Common myeloid progenitor, CD34-positive (primary cell): ENCODE measurements at regions of chr20 and their contacts with region 1.

Region 1: GRCh38 chr20:4720041-4720976 is 1.4 kb upstream of the PRND start:
- DNase-seq: peak; percentile 86 to 93 (median 91)
- H3K4me3 ChIP-seq: peak overlapping the region in 2 of 7 experiments; percentile 2 to 11
- H3K27ac ChIP-seq: no peak overlapping the region
- H3K4me1 ChIP-seq: peaks cover 0 to 13% (median 11%) of the 10 kb centered on the region in 4 experiments
- H3K27me3 ChIP-seq: no peaks in the 10 kb centered on the region

Region 2: GRCh38 chr20:4573564-4574355 is 146.5 kb before region 1 on chr20:
- CTCF ChIA-PET with region 1: no interaction called
- POLR2A ChIA-PET with region 1: no interaction called
- DNase-seq: peak; percentile 59 to 91 (median 90)
- H3K4me3 ChIP-seq: peak overlapping the region in 3 of 7 experiments; percentile 16 to 59 (median 22)
- H3K27ac ChIP-seq: no peak overlapping the region
- H3K4me1 ChIP-seq: peaks cover 2 to 14% (median 9%) of the 10 kb centered on the region in 4 experiments
- H3K27me3 ChIP-seq: no peaks in the 10 kb centered on the region

Region 3: GRCh38 chr20:4607287-4607713 is 113.0 kb before region 1 on chr20:
- CTCF ChIA-PET with region 1: interaction called, 280 read pairs
- POLR2A ChIA-PET with region 1: no interaction called
- DNase-seq: peak; percentile 69 to 83 (median 80)
- H3K4me3 ChIP-seq: no peak overlapping the region
- H3K27ac ChIP-seq: no peak overlapping the region
- H3K4me1 ChIP-seq: peaks cover 0 to 2% (median 0%) of the 10 kb centered on the region in 4 experiments
- H3K27me3 ChIP-seq: peaks cover 0 to 3% (median 0%) of the 10 kb centered on the region in 5 experiments